HCT116 (cell line): ENCODE measurements at regions of chr2 and their contacts with region 1.

Region 1: GRCh38 chr2:215624423-215624829 is 188.6 kb upstream of the FN1 start:
- DNase-seq: no peak
- ATAC-seq: no peak
- H3K4me3 ChIP-seq: no peak overlapping the region
- H3K27ac ChIP-seq: no peak overlapping the region
- H3K4me1 ChIP-seq: peaks cover 12% of the 10 kb centered on the region in 2 experiments
- H3K27me3 ChIP-seq: no peaks in the 10 kb centered on the region
- CTCF ChIP-seq: no peak
- POLR2A ChIP-seq: no peak
- RAD21 ChIP-seq: no peak

Region 2: DNA sequence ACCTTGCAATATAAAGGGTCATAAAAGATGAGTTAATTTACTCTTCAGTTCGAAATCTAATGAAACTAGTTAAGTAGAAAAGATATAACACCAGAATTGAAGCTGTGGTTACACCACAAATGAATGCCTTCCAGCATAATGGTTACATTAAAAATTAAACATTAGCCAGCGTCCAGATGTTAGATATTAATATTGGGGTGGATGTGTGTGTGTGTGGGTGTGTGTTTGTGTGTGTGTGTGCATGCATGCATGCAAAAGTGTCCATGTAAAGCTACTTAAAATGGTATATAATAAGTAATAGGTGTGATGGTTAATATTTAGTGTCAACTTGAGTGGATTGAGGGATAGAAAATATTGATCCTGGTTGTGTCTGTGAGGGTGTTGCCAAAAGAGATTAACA is 18.2 kb before region 1 on chr2:
- CTCF ChIA-PET with region 1: no interaction called
- POLR2A ChIA-PET with region 1: no interaction called
- RAD21 ChIA-PET with region 1: no interaction called
- intact Hi-C with region 1: loop called (anchors 1 kb)
- DNase-seq: no peak
- ATAC-seq: no peak
- H3K4me3 ChIP-seq: no peak overlapping the region
- H3K27ac ChIP-seq: no peak overlapping the region
- H3K4me1 ChIP-seq: no peaks in the 10 kb centered on the region
- H3K27me3 ChIP-seq: no peaks in the 10 kb centered on the region
- CTCF ChIP-seq: no peak
- POLR2A ChIP-seq: no peak
- RAD21 ChIP-seq: no peak